CD4-positive, alpha-beta memory T cell (primary cell): ENCODE measurements at regions of chr6 and their contacts with region 1.

Region 1: DNA sequence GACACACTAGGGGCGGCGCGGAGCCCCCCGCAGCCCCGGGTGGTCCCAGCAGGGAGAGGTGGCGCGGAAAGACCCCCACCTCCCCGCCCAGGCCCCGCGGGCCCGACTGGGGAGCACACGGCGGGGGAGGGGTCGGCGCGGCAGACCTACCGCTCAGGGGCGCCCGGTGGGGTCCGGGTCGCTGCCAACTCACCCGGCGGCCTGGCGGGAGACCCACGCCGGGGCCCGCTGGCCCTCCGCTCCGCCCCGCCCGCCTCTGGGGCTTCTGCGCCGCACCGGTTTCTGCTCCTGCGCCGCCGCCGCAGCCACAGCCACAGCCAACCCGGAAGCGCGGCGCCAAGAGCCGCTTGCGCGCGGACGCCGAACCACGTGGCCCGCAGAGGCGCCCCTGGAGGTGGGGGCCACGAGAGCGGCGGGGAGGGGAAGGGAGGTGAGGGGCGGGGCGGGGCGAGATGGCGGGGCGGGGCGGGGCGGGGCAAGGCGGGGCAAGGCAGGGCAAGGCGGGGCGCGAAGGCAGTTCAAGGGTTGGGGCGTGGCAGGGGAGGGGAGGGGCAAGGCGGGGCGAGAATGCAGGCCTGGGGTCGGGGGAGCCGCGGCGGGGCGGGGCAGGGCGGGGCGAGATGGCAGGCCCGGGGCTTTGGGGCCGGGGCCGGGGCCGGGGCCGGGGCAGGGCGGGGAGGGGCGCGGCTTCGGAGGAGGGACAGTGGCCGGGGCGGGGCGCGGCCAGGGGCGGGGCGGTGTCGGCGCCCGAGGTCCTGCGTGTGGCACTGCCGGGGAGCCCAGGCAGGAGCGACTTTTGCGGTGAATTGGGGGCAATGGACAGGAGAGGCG is at the start of gene ZBTB24:
- DNase-seq: peak; percentile 90 to 93 (median 91)
- H3K4me3 ChIP-seq: peak within 1 kb of the TSS; percentile 76 to 77
- H3K4me3 Mint-ChIP-seq: peak within 1 kb of the TSS; percentile 84 to 97 (median 96)
- H3K27ac ChIP-seq: peak within 1 kb of the TSS; percentile 69
- H3K27ac Mint-ChIP-seq: peak within 1 kb of the TSS; percentile 89 to 97 (median 95)
- H3K4me1 ChIP-seq: peaks cover 46% of the 10 kb centered on the region
- H3K4me1 Mint-ChIP-seq: peaks cover 41 to 54% (median 47%) of the 10 kb centered on the region in 4 donors
- H3K27me3 ChIP-seq: no peaks in the 10 kb centered on the region
- H3K27me3 Mint-ChIP-seq: no peaks in the 10 kb centered on the region
- total RNA-seq, gene ZBTB24: 27.2 to 28.4 TPM

Region 2: GRCh38 chr6:108260809-108261569 is 1222.1 kb before region 1 on chr6 and contains the start of gene SNX3:
- CTCF ChIA-PET with region 1: no interaction called
- POLR2A ChIA-PET with region 1: no interaction called
- intact Hi-C with region 1: loop called (anchors 1 kb)
- DNase-seq: peak; percentile 90 to 94 (median 91)
- H3K4me3 ChIP-seq: peak within 1 kb of the TSS; percentile 93 to 98
- H3K4me3 Mint-ChIP-seq: peak within 1 kb of the TSS; percentile 86 to 97 (median 92)
- H3K27ac ChIP-seq: peak within 1 kb of the TSS; percentile 84
- H3K27ac Mint-ChIP-seq: peak within 1 kb of the TSS; percentile 89 to 97 (median 95)
- H3K4me1 ChIP-seq: peaks cover 43% of the 10 kb centered on the region
- H3K4me1 Mint-ChIP-seq: peaks cover 15 to 38% (median 27%) of the 10 kb centered on the region in 4 donors
- H3K27me3 ChIP-seq: no peaks in the 10 kb centered on the region
- H3K27me3 Mint-ChIP-seq: peaks cover 0 to 2% of the 10 kb centered on the region in 2 donors
- total RNA-seq, gene SNX3: 65.9 to 66.6 TPM

Region 3: DNA sequence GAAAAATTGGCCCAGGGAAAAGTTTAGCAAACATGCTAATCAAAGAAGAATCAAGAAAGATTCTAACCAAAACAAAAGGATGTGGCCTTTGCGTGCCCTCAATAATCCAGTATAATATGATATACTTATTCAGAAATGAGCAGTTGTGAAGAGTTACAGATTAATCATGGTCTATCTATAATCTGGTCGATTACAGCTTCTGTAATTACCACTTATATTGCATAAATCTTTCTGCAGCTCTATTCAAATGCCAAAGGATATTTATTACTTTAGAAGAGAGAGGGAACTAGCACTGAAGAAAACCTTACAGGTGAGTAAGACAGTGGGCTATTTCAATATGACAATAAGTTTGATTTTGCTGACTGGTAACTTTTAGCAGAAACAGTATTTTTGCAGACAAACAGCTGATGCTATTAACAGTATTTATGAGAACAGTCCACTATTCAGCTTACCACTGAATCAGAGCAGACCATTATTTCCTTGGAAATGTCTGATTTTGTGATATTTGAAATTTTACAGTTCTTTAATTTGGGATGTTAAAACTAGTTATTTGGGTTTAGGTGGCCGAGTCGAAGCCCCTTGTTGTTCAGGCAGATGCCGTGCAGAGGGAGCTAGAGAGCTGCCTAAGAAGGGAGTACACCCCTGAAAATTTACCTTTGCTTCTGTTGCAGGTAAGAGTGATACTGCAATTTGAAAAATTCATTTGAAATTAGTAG is 295.6 kb before region 1 on chr6:
- CTCF ChIA-PET with region 1: interaction called, 4 read pairs
- POLR2A ChIA-PET with region 1: no interaction called
- intact Hi-C with region 1: loop called (anchors 2 kb)
- DNase-seq: peak; percentile 52 to 62 (median 59)
- H3K4me3 ChIP-seq: no peak overlapping the region
- H3K4me3 Mint-ChIP-seq: no peak overlapping the region
- H3K27ac ChIP-seq: no peak overlapping the region
- H3K27ac Mint-ChIP-seq: no peak overlapping the region
- H3K4me1 ChIP-seq: no peaks in the 10 kb centered on the region
- H3K4me1 Mint-ChIP-seq: peaks cover 0 to 5% (median 0%) of the 10 kb centered on the region in 4 donors
- H3K27me3 ChIP-seq: peaks cover 6% of the 10 kb centered on the region
- H3K27me3 Mint-ChIP-seq: peaks cover 3 to 10% of the 10 kb centered on the region in 2 donors

Region 4: GRCh38 chr6:109455502-109456282 is 27.4 kb before region 1 on chr6 and contains the start of gene MICAL1:
- CTCF ChIA-PET with region 1: interaction called, 15 read pairs
- POLR2A ChIA-PET with region 1: interaction called, 132 read pairs
- intact Hi-C with region 1: loop called (anchors 1 kb)
- DNase-seq: peak; percentile 78 to 90 (median 81)
- H3K4me3 ChIP-seq: peak within 1 kb of the TSS; percentile 76 to 91
- H3K4me3 Mint-ChIP-seq: peak within 1 kb of the TSS; percentile 87 to 99 (median 98)
- H3K27ac ChIP-seq: peak within 1 kb of the TSS; percentile 94
- H3K27ac Mint-ChIP-seq: peak within 1 kb of the TSS; percentile 95 to 100 (median 99)
- H3K4me1 ChIP-seq: peaks cover 75% of the 10 kb centered on the region
- H3K4me1 Mint-ChIP-seq: peaks cover 39 to 76% (median 59%) of the 10 kb centered on the region in 4 donors
- H3K27me3 ChIP-seq: no peaks in the 10 kb centered on the region
- H3K27me3 Mint-ChIP-seq: no peaks in the 10 kb centered on the region
- total RNA-seq, gene MICAL1: 76.5 to 79.3 TPM

Region 5: GRCh38 chr6:109515781-109516409 is 32.8 kb after region 1 on chr6:
- CTCF ChIA-PET with region 1: interaction called, 3 read pairs
- POLR2A ChIA-PET with region 1: interaction called, 4 read pairs
- intact Hi-C with region 1: loop called (anchors 5 kb)
- DNase-seq: peak in 3 of 5 donors; percentile 10 to 14 (median 12)
- H3K4me3 ChIP-seq: peak overlapping the region; percentile 14 to 43
- H3K4me3 Mint-ChIP-seq: peak overlapping the region; percentile 64 to 88 (median 74)
- H3K27ac ChIP-seq: no peak overlapping the region
- H3K27ac Mint-ChIP-seq: peak overlapping the region; percentile 43 to 81 (median 63)
- H3K4me1 ChIP-seq: peaks cover 25% of the 10 kb centered on the region
- H3K4me1 Mint-ChIP-seq: peaks cover 15 to 30% (median 23%) of the 10 kb centered on the region in 4 donors
- H3K27me3 ChIP-seq: no peaks in the 10 kb centered on the region
- H3K27me3 Mint-ChIP-seq: peaks cover 0 to 2% of the 10 kb centered on the region in 2 donors

Region 6: DNA sequence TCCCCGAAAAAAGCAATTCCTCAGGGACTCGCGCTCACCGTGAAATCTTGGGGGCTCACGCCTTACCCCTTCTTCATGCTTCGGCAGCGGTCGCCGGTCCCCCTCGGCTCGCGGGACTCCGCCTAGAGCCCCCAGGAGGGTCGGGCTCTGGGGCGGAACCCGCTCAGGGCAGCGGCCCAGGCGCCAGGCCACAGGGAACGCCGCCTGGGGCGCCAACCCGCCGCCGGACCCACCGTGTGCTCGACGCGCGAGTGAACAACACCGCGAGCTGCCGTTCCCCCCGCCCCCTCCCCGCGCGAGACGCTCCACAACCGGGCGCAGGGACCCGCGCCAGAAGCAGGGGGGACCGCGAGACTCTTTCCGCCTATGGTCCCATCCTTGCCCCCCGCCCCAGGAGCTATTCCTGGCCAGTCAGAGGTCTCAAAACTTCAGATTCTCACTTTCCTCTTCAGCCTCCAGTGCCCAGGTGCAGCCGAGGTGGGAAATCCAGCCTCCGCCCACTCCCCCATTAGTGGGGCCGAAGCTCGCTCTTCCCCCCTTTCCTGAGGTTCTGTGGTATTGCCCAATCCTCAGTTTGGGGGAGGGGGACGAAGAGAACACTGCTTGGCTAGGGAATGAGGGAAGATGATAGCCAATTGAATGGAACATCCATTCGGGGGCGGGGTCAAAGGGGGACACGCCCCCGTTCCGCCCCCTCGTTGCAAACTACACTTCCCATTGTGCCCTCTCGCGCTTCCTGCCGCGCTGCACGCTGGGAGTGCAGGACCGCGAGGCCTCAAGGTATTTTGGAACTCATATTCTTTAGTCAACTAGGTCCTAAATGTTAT is 696.5 kb after region 1 on chr6 and contains the start of gene WASF1:
- CTCF ChIA-PET with region 1: no interaction called
- POLR2A ChIA-PET with region 1: no interaction called
- intact Hi-C with region 1: loop called (anchors 2 kb)
- DNase-seq: peak; percentile 90 to 93 (median 92)
- H3K4me3 ChIP-seq: peak within 1 kb of the TSS; percentile 77 to 92
- H3K4me3 Mint-ChIP-seq: peak within 1 kb of the TSS; percentile 82 to 92 (median 86)
- H3K27ac ChIP-seq: peak within 1 kb of the TSS; percentile 88
- H3K27ac Mint-ChIP-seq: peak within 1 kb of the TSS; percentile 24 to 90 (median 64)
- H3K4me1 ChIP-seq: peaks cover 46% of the 10 kb centered on the region
- H3K4me1 Mint-ChIP-seq: peaks cover 5 to 7% (median 6%) of the 10 kb centered on the region in 4 donors
- H3K27me3 ChIP-seq: no peaks in the 10 kb centered on the region
- H3K27me3 Mint-ChIP-seq: peaks cover 4 to 5% of the 10 kb centered on the region in 2 donors
- total RNA-seq, gene WASF1: 0.39 to 0.70 TPM